ENCODE measurements at regions of chr10 and their contacts with region 1.

Region 1: DNA sequence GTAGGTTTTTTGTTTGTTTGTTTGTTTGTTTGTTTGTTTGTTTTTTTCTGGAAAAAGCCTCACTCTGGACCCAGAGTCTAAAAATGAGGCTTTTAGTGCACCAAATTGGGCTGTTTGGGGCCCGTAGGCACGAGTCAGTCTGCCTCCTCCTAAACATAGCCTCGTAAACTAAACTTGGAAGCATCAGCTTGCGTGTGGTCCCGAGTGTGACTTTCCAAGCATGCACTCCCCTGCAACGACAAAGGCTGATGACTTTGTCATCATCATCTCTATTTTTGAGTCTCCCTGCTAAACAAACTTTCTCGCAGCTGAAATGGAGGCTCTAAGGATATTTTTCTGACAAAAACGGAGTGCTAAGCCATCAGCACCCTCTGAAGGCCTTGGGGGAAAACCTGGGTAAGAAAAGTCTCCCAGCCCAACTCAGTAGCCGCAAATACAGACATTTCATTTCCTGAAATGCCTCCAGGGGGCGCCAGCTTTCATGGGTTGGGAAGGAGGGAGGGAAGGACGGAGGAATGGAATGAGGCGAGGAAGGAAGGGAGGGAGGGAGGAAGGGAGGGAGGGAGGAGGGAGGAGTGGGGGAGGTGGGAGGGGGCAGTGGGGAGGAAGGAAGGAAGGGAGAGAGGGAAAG is 245.9 kb downstream of the KCNMA1 start:
- DNase-seq: peak; percentile 67
- ATAC-seq: peak; percentile 60
- H3K4me3 ChIP-seq: no peak overlapping the region
- H3K27ac ChIP-seq: peak overlapping the region; percentile 78
- H3K4me1 ChIP-seq: peaks cover 63% of the 10 kb centered on the region
- H3K27me3 ChIP-seq: no peaks in the 10 kb centered on the region
- CTCF ChIP-seq: peak; percentile 93

Region 2: GRCh38 chr10:77165445-77166208 is 226.1 kb before region 1 on chr10:
- CTCF ChIA-PET with region 1: interaction called, 10 read pairs
- POLR2A ChIA-PET with region 1: interaction called, 3 read pairs
- in situ Hi-C with region 1: no loop called
- intact Hi-C with region 1: loop called (anchors 5 kb)
- DNase-seq: peak; percentile 88
- ATAC-seq: peak; percentile 78
- H3K4me3 ChIP-seq: no peak overlapping the region
- H3K27ac ChIP-seq: peak overlapping the region; percentile 0; the same call in 1 of the 2 replicates
- H3K4me1 ChIP-seq: peaks cover 28% of the 10 kb centered on the region
- H3K27me3 ChIP-seq: no peaks in the 10 kb centered on the region
- CTCF ChIP-seq: no peak; the same call in 1 of the 2 replicates

Region 3: GRCh38 chr10:77236700-77237099 is 155.0 kb before region 1 on chr10:
- CTCF ChIA-PET with region 1: no interaction called
- POLR2A ChIA-PET with region 1: no interaction called
- in situ Hi-C with region 1: no loop called
- intact Hi-C with region 1: no loop called
- DNase-seq: no peak
- ATAC-seq: 0 out of 2 replicates have a peak, but pooled peaks have one; percentile 49
- H3K4me3 ChIP-seq: no peak overlapping the region
- H3K27ac ChIP-seq: no peak overlapping the region
- H3K4me1 ChIP-seq: peaks cover 20% of the 10 kb centered on the region; the same call in 1 of the 2 replicates
- H3K27me3 ChIP-seq: no peaks in the 10 kb centered on the region
- CTCF ChIP-seq: no peak

Region 4: DNA sequence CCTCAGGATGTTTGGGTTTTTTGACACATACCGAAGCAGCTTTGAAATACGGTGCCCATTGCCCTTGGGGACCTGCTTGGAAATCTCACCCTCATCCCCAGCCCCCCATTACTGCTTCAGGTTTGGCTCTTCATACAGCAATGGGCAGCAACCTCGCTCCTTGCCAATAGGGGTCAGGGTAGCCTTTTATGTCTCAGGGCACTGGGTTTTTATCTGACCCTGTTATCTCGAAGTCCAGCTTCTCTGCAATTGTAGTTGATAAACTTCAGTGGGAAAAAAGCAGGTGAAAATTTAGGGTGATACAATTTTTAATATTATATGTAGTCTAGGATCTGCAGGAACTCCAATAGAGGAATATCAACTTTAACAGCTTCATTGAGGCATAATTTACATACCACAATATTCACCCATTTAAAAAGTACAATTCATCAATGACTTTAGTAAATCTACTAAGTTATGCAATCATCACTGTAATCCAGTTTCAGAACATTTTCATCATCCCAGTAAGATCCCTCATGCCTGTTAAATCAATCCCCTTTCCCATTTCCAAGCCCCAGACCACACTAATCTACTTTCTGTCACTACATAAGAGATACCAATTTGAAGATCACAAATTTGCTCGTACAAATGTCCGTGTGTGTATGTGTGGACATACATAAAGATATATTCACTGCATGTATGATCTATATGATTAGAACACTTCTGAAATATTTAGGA is 140.3 kb before region 1 on chr10:
- CTCF ChIA-PET with region 1: no interaction called
- POLR2A ChIA-PET with region 1: no interaction called
- in situ Hi-C with region 1: no loop called
- intact Hi-C with region 1: loop called (anchors 5 kb)
- DNase-seq: no peak
- ATAC-seq: peak; percentile 75; the same call in 1 of the 2 replicates
- H3K4me3 ChIP-seq: no peak overlapping the region
- H3K27ac ChIP-seq: peak overlapping the region; percentile 3; the same call in 1 of the 2 replicates
- H3K4me1 ChIP-seq: no peaks in the 10 kb centered on the region
- H3K27me3 ChIP-seq: no peaks in the 10 kb centered on the region
- CTCF ChIP-seq: peak; percentile 82

Region 5: DNA sequence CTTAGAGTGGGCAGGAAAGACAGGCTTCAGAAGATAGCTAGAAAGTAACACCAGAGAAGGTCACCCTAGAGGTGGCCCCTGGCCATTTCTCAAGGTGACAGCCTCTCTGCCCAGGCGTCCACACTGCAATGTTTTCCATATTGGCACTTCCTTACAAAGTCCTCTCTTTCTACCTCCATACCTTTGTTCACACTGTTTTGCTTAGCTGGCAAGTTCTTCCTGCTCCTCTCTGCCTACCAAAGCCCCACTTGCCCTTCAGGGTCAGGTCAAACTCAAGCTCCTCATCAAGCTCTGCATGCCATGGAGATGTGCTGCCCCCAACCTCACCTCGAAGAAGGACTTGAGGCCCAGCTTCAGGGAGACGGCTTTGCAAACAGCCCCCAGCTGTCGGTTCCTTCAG is 55.0 kb after region 1 on chr10:
- CTCF ChIA-PET with region 1: interaction called, 11 read pairs
- POLR2A ChIA-PET with region 1: no interaction called
- in situ Hi-C with region 1: no loop called
- intact Hi-C with region 1: no loop called
- DNase-seq: no peak
- ATAC-seq: no peak
- H3K4me3 ChIP-seq: no peak overlapping the region
- H3K27ac ChIP-seq: no peak overlapping the region
- H3K4me1 ChIP-seq: no peaks in the 10 kb centered on the region
- H3K27me3 ChIP-seq: no peaks in the 10 kb centered on the region
- CTCF ChIP-seq: no peak

Region 6: GRCh38 chr10:77513781-77514331 is 122.1 kb after region 1 on chr10:
- CTCF ChIA-PET with region 1: no interaction called
- POLR2A ChIA-PET with region 1: interaction called, 3 read pairs
- in situ Hi-C with region 1: no loop called
- intact Hi-C with region 1: loop called (anchors 5 kb)
- DNase-seq: peak; percentile 85
- ATAC-seq: peak; percentile 91
- H3K4me3 ChIP-seq: peak overlapping the region in 1 of 2 experiments; percentile 26; a peak in 2 of 4 replicates
- H3K27ac ChIP-seq: peak overlapping the region; percentile 84
- H3K4me1 ChIP-seq: peaks cover 88% of the 10 kb centered on the region
- H3K27me3 ChIP-seq: no peaks in the 10 kb centered on the region
- CTCF ChIP-seq: no peak

Measured in Panc1 (cell line).